Dendritic cell treated with granulocyte-macrophage colony-stimulating factor and Interleukin-4, amounts not matched to agents 40 ng/mL and 50 ng/mL, for 4 days (primary cell): ENCODE measurements at regions of chr1 and their contacts with region 1.

Region 1: GRCh38 chr1:6889875-6890480 is 104.7 kb downstream of the CAMTA1 start:
- H3K4me3 Mint-ChIP-seq: no peak overlapping the region
- H3K27ac Mint-ChIP-seq: no peak overlapping the region
- H3K4me1 Mint-ChIP-seq: peaks cover 4% of the 10 kb centered on the region
- H3K27me3 Mint-ChIP-seq: no peaks in the 10 kb centered on the region

Region 2: DNA sequence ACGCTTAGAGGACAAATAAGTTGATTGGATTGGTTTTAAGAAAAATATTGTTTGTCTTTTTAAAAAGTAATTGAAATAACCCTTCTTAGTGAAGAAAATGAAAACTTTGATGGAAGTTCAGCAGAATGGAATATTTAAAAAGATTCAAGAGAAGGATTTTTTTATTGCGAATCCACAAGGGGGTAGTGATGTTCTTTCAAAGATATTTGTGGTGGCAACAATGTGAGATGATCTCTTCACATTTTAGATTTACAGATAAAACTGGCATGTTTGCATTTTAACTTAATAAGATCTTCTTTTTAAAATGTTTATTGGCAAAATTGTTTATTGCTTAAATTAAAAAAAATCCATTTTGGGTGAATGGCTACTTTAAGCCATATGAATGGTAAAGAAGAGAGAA is 95.8 kb before region 1 on chr1:
- intact Hi-C with region 1: loop called (anchors 1 kb)
- H3K4me3 Mint-ChIP-seq: no peak overlapping the region
- H3K27ac Mint-ChIP-seq: no peak overlapping the region
- H3K4me1 Mint-ChIP-seq: peaks cover 34% of the 10 kb centered on the region
- H3K27me3 Mint-ChIP-seq: no peaks in the 10 kb centered on the region